Head of caudate nucleus (tissue), 42 donors: ENCODE measurements at regions of chr2 and their contacts with region 1.

Region 1: DNA sequence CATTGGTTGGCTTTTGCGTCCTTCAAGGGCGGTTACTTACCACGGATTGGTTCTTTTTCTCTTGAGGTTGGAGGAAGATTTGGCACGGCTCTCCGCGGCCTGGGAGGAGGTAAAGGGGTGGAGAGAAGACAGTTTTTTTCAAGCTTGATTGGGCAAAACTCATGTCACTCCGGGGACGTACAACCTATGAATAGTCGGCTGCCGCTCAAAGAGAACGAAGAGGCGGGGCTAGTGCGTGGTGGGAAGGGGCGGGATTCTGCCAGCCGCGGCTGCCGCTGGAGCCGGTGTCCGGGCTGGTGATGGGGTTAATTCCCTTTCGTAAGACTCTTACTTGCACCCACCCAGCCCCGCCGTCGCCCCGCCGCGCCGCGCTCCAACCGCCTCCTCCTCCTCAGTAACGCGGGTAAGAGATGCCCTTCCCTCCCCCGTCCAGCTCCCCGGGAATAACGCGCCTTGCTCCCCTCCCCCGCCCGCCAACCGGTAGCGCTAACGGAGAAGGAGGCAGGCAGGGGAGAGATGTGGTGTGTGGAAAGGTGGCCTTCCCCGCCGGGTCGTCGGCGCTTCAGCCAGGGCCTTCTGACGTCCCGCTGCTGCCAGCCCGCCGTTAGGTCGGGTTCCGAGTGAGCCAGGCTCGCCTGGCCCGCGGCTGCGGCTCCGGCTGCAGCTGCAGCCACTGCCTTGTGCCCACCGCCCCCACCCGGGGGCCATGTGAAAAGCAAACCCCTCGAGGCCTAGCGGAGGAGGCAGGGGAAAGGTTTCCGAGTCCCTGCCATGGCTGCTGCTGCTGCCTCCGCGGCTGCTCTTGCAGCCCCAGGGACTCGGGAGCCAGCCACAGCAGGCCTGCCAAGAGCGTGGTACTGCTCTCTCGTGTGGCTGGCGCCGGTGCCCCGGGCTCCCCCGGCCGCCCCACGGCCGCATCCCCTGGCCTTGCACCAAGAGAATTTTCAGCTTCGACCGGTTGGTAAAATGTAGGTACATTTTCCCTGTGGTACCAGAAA is at the start of gene R3HDM1:
- DNase-seq: peak; percentile 89 to 100 (median 98)

Region 2: GRCh38 chr2:134918526-134919340 is 612.8 kb before region 1 on chr2 and contains the start of gene CCNT2:
- intact Hi-C with region 1: loop called (anchors 5 kb)
- DNase-seq: peak; percentile 96 to 100 (median 99)

Region 3: DNA sequence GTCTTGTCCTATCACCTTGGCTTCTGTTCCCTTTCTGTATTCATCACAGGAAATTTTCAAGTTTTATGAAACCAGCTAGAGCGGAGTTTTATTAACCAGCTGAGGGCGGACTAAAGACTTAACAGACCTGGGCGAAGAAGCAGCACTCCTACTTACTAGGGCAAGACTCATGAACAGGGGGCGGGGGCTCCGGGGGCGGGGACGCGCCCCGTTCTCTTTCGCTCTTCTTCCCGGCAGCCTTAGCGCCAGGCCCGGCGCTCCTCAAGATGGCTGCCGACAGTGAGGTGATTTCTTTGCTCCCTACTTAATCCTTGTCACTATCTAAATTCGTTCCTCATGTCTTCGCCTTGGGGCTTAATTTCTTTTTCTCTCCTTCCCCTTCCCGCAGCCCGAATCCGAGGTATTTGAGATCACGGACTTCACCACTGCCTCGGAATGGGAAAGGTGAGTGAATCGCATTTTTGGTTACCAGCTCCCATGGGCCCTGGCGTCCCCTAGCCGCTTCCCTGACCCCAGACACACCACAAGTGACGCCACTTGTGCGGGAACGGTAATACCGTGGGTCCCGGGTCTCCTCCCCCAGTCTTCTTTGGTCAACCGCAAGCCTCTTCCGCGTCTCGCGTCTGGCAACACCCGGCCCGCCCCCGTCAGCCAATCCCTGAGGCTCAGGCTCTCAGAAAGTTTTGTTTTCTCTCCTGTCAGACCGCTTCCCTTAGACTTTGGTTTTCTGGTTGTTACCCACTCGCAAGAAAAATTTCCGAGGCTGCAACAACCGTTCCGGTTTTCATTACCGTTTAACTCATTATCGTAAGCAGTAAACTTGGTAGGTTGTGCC is 479.3 kb before region 1 on chr2 and contains the start of gene RAB3GAP1:
- intact Hi-C with region 1: loop called (anchors 10 kb)
- DNase-seq: peak; percentile 42 to 89 (median 77)

Region 4: GRCh38 chr2:135226961-135227360 is 304.6 kb before region 1 on chr2:
- intact Hi-C with region 1: no loop called
- DNase-seq: no peak

Region 5: DNA sequence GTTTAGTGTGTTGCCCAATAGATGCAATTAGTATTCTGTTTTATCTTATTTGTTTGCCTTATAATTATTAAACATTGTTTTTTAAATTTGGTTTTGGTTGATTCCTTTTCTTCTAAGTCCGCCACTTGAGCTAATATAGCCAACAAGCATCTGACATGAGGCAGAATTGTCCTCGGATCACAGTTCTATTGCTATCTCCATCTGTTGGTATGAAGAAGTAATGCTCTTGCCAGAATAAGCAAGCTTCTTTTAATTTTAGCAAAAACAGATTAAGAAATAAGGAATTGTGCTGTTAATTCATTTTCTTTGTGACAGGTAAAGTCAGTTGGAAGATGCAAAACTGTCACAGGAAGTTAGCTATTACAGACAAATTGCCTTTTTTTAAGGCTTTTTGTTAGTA is 54.1 kb after region 1 on chr2:
- intact Hi-C with region 1: no loop called
- DNase-seq: peak in 2 of 42 donors; percentile 9 to 41

Region 6: GRCh38 chr2:135741395-135742324 is 210.1 kb after region 1 on chr2 and contains the start of gene UBXN4:
- intact Hi-C with region 1: loop called (anchors 5 kb)
- DNase-seq: peak; percentile 91 to 99 (median 97)